H1 (cell line): ENCODE measurements at regions of chr1 and their contacts with region 1.

Region 1: DNA sequence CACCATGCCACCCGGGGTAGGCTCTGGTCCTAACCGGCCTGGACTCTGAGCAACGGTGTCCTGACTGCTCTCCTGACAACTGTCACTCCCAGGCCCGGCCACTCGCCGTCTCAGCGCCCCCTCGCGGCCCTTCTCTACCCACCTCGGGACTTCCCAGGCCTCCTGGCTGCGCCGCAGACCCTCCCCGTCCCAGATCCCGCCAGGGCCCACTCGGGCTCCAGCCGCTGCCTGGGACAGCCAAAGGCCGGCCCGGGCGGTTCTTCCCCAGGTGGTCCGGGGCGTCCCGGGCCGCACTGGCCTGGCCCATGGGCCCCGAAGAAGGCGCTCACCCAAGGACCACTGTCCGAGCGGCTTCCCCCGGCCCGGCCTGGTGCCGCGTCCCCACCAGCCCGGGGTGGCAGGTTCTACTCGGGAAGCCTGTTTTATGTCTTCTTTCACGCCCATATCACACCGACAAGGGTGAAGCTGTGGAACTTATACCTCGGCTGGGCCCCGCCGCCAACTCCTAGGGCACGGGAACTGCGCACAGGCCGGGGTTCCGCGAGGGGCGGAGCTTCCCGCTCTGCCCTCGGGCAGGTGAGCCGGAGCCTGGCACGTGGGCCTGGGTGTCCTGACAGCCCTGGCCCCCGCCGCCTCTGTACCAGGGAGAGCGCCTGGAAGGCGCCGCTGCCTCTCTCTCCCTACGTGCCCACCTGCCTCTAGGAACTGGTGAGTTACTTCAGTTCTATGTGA is 138.3 kb downstream of the TTLL7 start:
- DNase-seq: peak; percentile 34 to 94
- H3K4me3 ChIP-seq: peak overlapping the region; percentile 19 to 59 (median 38)
- H3K27ac ChIP-seq: no peak overlapping the region
- H3K4me1 ChIP-seq: no peaks in the 10 kb centered on the region
- H3K27me3 ChIP-seq: peaks cover 0 to 8% (median 5%) of the 10 kb centered on the region in 4 experiments; a peak in 6 of 7 replicates
- CTCF ChIP-seq: peak; percentile 81 to 88 (median 82)
- EP300 ChIP-seq: no peak
- POLR2A ChIP-seq: no peak
- RAD21 ChIP-seq: peak; percentile 77 to 80

Region 2: GRCh38 chr1:83593073-83593472 is 267.6 kb before region 1 on chr1:
- CTCF ChIA-PET with region 1: interaction called, 21 read pairs
- POLR2A ChIA-PET with region 1: no interaction called
- DNase-seq: no peak
- H3K4me3 ChIP-seq: no peak overlapping the region
- H3K27ac ChIP-seq: no peak overlapping the region
- H3K4me1 ChIP-seq: peaks cover 0 to 2% (median under 1%) of the 10 kb centered on the region in 4 experiments; a peak in 2 of 7 replicates
- H3K27me3 ChIP-seq: no peaks in the 10 kb centered on the region
- CTCF ChIP-seq: peak in 2 of 3 experiments; percentile 54 to 56; a peak in 3 of 4 replicates
- EP300 ChIP-seq: no peak
- POLR2A ChIP-seq: no peak
- RAD21 ChIP-seq: peak; percentile 90

Region 3: GRCh38 chr1:83606416-83606955 is 254.2 kb before region 1 on chr1:
- CTCF ChIA-PET with region 1: no interaction called
- POLR2A ChIA-PET with region 1: no interaction called
- DNase-seq: no peak
- H3K4me3 ChIP-seq: no peak overlapping the region
- H3K27ac ChIP-seq: no peak overlapping the region
- H3K4me1 ChIP-seq: no peaks in the 10 kb centered on the region
- H3K27me3 ChIP-seq: peaks cover 0 to 1% (median 0%) of the 10 kb centered on the region in 4 experiments; a peak in 2 of 7 replicates
- CTCF ChIP-seq: no peak
- EP300 ChIP-seq: no peak
- POLR2A ChIP-seq: no peak
- RAD21 ChIP-seq: no peak

Region 4: DNA sequence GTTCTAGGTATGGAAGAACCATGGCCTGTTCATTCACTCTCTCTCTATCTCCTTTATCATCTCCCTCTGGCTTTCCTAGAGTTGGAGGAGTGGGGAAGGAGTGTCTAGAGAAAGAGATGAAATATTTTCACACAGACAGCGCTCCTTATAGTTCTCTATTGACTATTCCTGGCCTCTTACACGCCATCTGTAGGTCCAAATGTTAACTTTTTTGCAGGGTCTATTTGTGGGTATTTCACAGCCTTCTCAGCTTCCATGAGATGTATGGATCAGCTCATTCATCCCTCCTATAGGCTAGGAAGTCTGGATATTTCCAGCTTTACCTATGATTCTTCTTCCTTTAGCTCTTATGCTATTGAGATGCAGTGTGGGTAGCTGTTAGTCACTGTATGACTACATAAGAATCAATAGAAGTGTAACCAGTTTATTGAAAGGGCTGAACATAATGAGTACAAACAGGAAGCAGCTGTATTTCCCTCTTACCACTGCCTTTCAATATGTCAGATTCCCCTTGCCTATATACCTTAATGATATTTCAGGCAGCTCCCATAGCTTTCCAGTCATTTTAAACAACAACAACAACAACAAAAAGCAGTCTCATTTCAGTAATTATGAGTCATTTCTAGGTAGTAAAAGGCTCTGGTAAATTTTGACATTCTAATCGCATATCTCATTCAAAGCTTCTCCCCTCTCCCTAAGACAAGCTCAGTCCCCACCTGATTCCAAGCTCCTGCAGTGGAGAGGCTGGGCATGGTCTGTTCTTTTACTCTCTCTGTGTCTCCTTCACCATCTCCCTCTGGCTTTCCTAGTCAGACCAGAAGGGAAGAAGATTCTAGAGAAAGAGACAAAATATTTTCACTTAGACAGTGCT is 11.2 kb before region 1 on chr1:
- CTCF ChIA-PET with region 1: interaction called, 13 read pairs
- POLR2A ChIA-PET with region 1: no interaction called
- DNase-seq: no peak
- H3K4me3 ChIP-seq: no peak overlapping the region
- H3K27ac ChIP-seq: no peak overlapping the region
- H3K4me1 ChIP-seq: no peaks in the 10 kb centered on the region
- H3K27me3 ChIP-seq: no peaks in the 10 kb centered on the region
- CTCF ChIP-seq: peak in 1 of 3 experiments; percentile 18; a peak in 1 of 4 replicates
- EP300 ChIP-seq: no peak
- POLR2A ChIP-seq: no peak
- RAD21 ChIP-seq: peak in 1 of 2 experiments; percentile 31; a peak in 2 of 4 replicates